ENCODE measurements at regions of chr20 and their contacts with region 1.

Region 1: DNA sequence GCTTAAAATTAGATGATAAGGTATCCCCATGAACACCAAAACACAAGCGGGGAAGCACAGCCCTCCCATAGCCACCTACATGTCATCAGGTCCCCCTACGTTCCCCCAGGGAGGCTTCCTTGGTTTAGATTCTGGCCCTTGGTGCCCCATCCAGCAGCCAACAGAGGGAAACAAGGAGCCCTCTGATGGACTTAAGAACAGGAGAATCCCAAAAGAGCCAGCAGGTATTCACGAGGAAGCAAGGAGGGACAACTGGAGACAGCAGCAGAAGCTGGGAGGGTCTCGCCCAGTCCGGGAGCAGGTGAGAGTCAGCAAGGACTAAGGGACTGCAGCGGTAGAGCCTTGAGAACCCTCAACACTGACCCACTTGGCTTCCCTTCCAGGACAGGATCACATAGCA is 58.4 kb upstream of the TOP1 start:
- DNase-seq: no peak
- H3K4me3 ChIP-seq: no peak overlapping the region
- H3K4me3 Mint-ChIP-seq: peak overlapping the region in 1 of 8 donors; percentile 5
- H3K27ac ChIP-seq: no peak overlapping the region
- H3K27ac Mint-ChIP-seq: peak overlapping the region in 1 of 7 donors; percentile 41
- H3K4me1 ChIP-seq: no peaks in the 10 kb centered on the region
- H3K4me1 Mint-ChIP-seq: peaks cover 6 to 10% (median 8%) of the 10 kb centered on the region in 4 donors
- H3K27me3 ChIP-seq: no peaks in the 10 kb centered on the region
- H3K27me3 Mint-ChIP-seq: no peaks in the 10 kb centered on the region

Region 2: DNA sequence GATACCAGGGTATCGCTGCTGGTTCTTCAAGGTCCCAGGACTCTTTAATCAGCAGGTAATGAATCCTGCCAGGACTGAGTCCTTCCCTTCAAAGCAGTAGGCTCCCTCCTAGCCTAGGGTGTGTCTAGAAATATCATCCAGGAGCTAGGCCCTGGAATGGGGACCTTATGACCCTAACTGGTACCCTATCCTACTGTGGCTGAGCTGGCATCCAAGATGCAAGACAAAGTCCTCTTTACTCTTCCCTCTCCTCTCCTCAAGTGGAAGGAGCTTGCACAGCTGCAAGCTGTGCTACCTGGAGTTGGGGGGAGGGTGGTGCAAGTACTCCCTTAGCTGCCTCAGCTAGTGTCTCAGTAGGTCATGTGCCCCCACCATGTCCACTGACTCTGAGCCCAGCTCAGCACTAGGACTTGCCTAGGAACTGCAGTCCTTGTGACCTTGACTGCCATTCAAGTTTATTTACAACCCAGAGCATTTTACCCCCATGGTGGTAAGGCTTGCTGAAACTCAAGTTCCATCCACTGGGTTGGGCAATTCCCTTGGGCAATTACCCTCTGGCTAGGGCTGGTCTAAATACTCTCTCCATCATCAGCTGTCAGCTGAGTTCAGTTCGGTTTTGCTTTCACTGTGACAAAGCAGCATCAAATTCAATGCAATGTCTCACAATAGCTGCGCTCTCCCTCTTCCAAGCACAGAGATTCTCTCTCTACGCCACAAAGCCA is 10.1 kb after region 1 on chr20:
- CTCF ChIA-PET with region 1: interaction called, 93 read pairs
- POLR2A ChIA-PET with region 1: no interaction called
- intact Hi-C with region 1: no loop called
- DNase-seq: no peak
- H3K4me3 ChIP-seq: no peak overlapping the region
- H3K4me3 Mint-ChIP-seq: no peak overlapping the region
- H3K27ac ChIP-seq: no peak overlapping the region
- H3K27ac Mint-ChIP-seq: no peak overlapping the region
- H3K4me1 ChIP-seq: no peaks in the 10 kb centered on the region
- H3K4me1 Mint-ChIP-seq: no peaks in the 10 kb centered on the region
- H3K27me3 ChIP-seq: no peaks in the 10 kb centered on the region
- H3K27me3 Mint-ChIP-seq: peaks cover 9 to 14% of the 10 kb centered on the region in 2 donors

Region 3: DNA sequence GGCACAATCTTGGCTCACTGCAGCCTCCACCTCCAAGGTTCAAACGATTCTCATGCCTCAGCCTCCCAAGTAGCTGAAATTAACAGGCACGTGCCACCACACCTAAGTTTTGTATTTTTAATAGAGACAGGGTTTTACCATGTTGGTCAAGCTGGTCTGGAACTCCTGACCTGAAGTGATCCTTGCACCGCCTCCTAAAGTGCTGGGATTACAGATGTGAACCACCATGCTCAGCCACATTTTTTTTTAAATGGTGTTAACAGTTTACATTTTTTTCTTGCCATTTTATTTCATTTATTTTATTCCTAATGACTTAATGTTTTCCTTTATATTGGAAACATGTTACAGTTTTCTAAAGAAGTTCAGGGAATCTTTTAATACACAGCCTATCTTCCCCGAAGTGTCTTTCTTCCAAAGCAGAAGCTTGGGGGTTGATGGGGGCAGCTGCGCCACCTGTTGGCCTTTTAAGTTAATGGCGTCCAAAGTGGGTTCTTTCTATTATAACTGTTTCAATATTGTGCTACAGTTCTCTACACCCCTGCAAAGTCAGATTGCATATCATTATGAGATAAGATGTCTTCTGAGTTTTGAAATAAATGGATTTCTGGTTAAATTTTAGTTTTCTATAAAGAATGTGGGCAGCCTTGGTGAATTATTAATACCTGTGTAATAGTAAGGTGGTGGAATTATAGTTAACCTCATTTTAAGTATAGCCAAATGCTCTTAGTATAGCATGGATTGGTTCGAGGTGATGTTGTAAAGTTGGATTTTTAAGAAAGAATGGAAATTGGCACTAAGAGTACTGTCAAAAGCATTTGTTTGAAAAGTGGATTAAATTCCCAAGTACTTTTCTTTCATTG is 125.1 kb after region 1 on chr20:
- CTCF ChIA-PET with region 1: interaction called, 147 read pairs
- POLR2A ChIA-PET with region 1: interaction called, 4 read pairs
- intact Hi-C with region 1: loop called (anchors 1 kb)
- DNase-seq: peak in 4 of 5 donors; percentile 51 to 61 (median 54)
- H3K4me3 ChIP-seq: no peak overlapping the region
- H3K4me3 Mint-ChIP-seq: no peak overlapping the region
- H3K27ac ChIP-seq: no peak overlapping the region
- H3K27ac Mint-ChIP-seq: peak overlapping the region in 2 of 7 donors; percentile 46 to 72
- H3K4me1 ChIP-seq: no peaks in the 10 kb centered on the region
- H3K4me1 Mint-ChIP-seq: peaks cover 0 to 6% (median 0%) of the 10 kb centered on the region in 4 donors
- H3K27me3 ChIP-seq: no peaks in the 10 kb centered on the region
- H3K27me3 Mint-ChIP-seq: no peaks in the 10 kb centered on the region

Region 4: GRCh38 chr20:41392871-41393704 is 422.9 kb after region 1 on chr20:
- CTCF ChIA-PET with region 1: no interaction called
- POLR2A ChIA-PET with region 1: no interaction called
- intact Hi-C with region 1: no loop called
- DNase-seq: no peak
- H3K4me3 ChIP-seq: no peak overlapping the region
- H3K4me3 Mint-ChIP-seq: no peak overlapping the region
- H3K27ac ChIP-seq: no peak overlapping the region
- H3K27ac Mint-ChIP-seq: peak overlapping the region in 1 of 7 donors; percentile 12
- H3K4me1 ChIP-seq: no peaks in the 10 kb centered on the region
- H3K4me1 Mint-ChIP-seq: peaks cover 0 to 4% (median 1%) of the 10 kb centered on the region in 4 donors
- H3K27me3 ChIP-seq: no peaks in the 10 kb centered on the region
- H3K27me3 Mint-ChIP-seq: no peaks in the 10 kb centered on the region

Measured in CD4-positive, alpha-beta memory T cell (primary cell).